Dendritic cell treated with granulocyte-macrophage colony-stimulating factor and Interleukin-4, amounts not matched to agents 40 ng/mL and 50 ng/mL, for 4 days (primary cell): ENCODE measurements at regions of chr2 and their contacts with region 1.

Region 1: GRCh38 chr2:137947728-137948336 is 16.4 kb upstream of the HNMT start:
- H3K4me3 Mint-ChIP-seq: no peak overlapping the region
- H3K27ac Mint-ChIP-seq: no peak overlapping the region
- H3K4me1 Mint-ChIP-seq: peaks cover 30% of the 10 kb centered on the region
- H3K27me3 Mint-ChIP-seq: no peaks in the 10 kb centered on the region

Region 2: GRCh38 chr2:137888845-137889244 is 59.0 kb before region 1 on chr2:
- intact Hi-C with region 1: no loop called
- H3K4me3 Mint-ChIP-seq: no peak overlapping the region
- H3K27ac Mint-ChIP-seq: no peak overlapping the region
- H3K4me1 Mint-ChIP-seq: peaks cover 6% of the 10 kb centered on the region
- H3K27me3 Mint-ChIP-seq: peaks cover 3% of the 10 kb centered on the region

Region 3: GRCh38 chr2:137969418-137969765 is 21.6 kb after region 1 on chr2:
- intact Hi-C with region 1: loop called (anchors 2 kb)
- H3K4me3 Mint-ChIP-seq: peak overlapping the region; percentile 47
- H3K27ac Mint-ChIP-seq: peak overlapping the region; percentile 96
- H3K4me1 Mint-ChIP-seq: peaks cover 46% of the 10 kb centered on the region
- H3K27me3 Mint-ChIP-seq: no peaks in the 10 kb centered on the region

Region 4: GRCh38 chr2:137980459-137980858 is 32.6 kb after region 1 on chr2:
- intact Hi-C with region 1: no loop called
- H3K4me3 Mint-ChIP-seq: no peak overlapping the region
- H3K27ac Mint-ChIP-seq: peak overlapping the region; percentile 39
- H3K4me1 Mint-ChIP-seq: peaks cover 64% of the 10 kb centered on the region
- H3K27me3 Mint-ChIP-seq: no peaks in the 10 kb centered on the region

Region 5: GRCh38 chr2:138028538-138028937 is 80.7 kb after region 1 on chr2:
- intact Hi-C with region 1: loop called (anchors 5 kb)
- H3K4me3 Mint-ChIP-seq: no peak overlapping the region
- H3K27ac Mint-ChIP-seq: no peak overlapping the region
- H3K4me1 Mint-ChIP-seq: peaks cover 8% of the 10 kb centered on the region
- H3K27me3 Mint-ChIP-seq: no peaks in the 10 kb centered on the region

Region 6: DNA sequence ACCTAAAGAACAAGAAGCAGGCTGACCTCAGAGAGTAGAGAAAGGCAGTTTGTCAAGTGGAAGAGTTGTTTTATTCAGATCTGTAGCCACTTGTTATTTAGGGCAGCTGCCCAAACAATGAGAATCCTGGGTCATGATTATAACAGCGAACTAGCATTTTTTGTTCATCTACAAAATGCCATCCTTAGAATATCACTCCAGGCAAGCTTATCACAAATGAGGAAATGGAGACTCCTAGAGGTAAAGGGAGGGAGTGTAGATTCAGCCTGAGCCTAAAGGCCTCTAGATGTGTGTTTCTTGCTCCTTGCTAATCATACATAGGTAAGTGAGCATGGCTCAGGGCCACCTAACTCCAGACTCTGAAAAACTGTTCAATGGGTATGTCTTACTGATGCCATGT is 142.5 kb after region 1 on chr2:
- intact Hi-C with region 1: loop called (anchors 1 kb)
- H3K4me3 Mint-ChIP-seq: no peak overlapping the region
- H3K27ac Mint-ChIP-seq: no peak overlapping the region
- H3K4me1 Mint-ChIP-seq: peaks cover 24% of the 10 kb centered on the region
- H3K27me3 Mint-ChIP-seq: no peaks in the 10 kb centered on the region

Region 7: DNA sequence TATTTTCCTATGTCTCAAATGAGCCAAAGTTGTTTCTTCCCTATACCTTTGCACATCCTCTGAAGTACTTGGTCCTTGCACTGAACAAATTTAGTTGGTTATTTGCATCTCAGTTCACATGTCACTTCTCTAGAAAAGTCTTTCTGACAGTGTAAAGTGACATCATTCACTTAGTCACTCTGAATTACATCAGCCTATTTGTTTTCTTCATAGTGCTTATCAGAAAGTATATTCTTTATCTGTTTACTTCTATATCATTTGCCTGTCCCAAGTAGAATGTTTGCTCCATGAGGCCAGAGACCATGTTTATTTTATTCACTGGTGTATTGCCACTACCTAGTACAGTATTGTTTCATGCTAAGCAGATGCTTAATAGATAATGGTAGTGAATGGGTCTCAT is 190.1 kb after region 1 on chr2:
- intact Hi-C with region 1: no loop called
- H3K4me3 Mint-ChIP-seq: no peak overlapping the region
- H3K27ac Mint-ChIP-seq: no peak overlapping the region
- H3K4me1 Mint-ChIP-seq: no peaks in the 10 kb centered on the region
- H3K27me3 Mint-ChIP-seq: no peaks in the 10 kb centered on the region